MCF 10A (cell line): ENCODE measurements at regions of chr17 and their contacts with region 1.

Region 1: GRCh38 chr17:7834962-7835813 is 1.2 kb downstream of the KDM6B start:
- DNase-seq: peak; percentile 97
- H3K4me3 Mint-ChIP-seq: peak overlapping the region; percentile 89
- H3K27ac Mint-ChIP-seq: peak overlapping the region; percentile 99
- H3K4me1 Mint-ChIP-seq: peaks cover 43% of the 10 kb centered on the region
- H3K27me3 Mint-ChIP-seq: no peaks in the 10 kb centered on the region
- CTCF ChIP-seq: peak; percentile 73

Region 2: GRCh38 chr17:7583253-7584109 is 251.7 kb before region 1 on chr17 and contains the start of gene MPDU1:
- CTCF ChIA-PET with region 1: interaction called, 3 read pairs
- POLR2A ChIA-PET with region 1: interaction called, 14 read pairs
- intact Hi-C with region 1: no loop called
- DNase-seq: peak; percentile 98
- H3K4me3 Mint-ChIP-seq: peak within 1 kb of the TSS; percentile 93
- H3K27ac Mint-ChIP-seq: peak within 1 kb of the TSS; percentile 100
- H3K4me1 Mint-ChIP-seq: peaks cover 56% of the 10 kb centered on the region
- H3K27me3 Mint-ChIP-seq: no peaks in the 10 kb centered on the region
- CTCF ChIP-seq: no peak
- total RNA-seq, gene MPDU1: 52.0 and 56.5 TPM in 2 replicates

Region 3: DNA sequence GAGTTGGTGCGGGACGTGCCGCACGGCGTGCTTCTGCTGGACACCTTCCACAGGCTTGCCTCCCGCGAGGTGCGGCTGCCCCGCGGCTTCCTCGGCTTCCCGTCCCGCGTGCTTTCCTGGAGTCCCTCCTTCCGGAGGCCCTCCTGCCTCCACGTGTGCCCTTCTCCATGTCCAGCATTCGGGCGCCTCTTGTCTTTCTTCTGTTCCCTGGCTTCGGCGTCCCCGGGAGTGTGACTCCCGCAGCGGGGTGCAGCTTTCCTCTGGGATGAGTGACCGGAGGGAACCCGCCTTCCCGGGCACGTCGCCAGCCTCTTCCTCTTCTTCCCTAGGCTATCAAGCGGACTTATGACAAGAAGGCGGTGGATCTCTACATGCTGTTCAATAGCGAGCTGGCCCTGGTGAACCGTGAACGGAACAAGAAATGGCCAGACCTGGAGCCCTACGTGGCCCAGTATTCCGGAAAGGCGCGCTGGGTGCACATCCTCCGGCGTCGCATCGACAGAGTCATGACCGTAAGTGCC is 94.6 kb before region 1 on chr17:
- CTCF ChIA-PET with region 1: interaction called, 36 read pairs
- POLR2A ChIA-PET with region 1: interaction called, 11 read pairs
- intact Hi-C with region 1: no loop called
- DNase-seq: no peak
- H3K4me3 Mint-ChIP-seq: peak overlapping the region; percentile 67
- H3K27ac Mint-ChIP-seq: peak overlapping the region; percentile 43
- H3K4me1 Mint-ChIP-seq: peaks cover 6% of the 10 kb centered on the region
- H3K27me3 Mint-ChIP-seq: peaks cover 56% of the 10 kb centered on the region
- CTCF ChIP-seq: no peak

Region 4: GRCh38 chr17:7794075-7794663 is 41.0 kb before region 1 on chr17:
- CTCF ChIA-PET with region 1: no interaction called
- POLR2A ChIA-PET with region 1: no interaction called
- intact Hi-C with region 1: no loop called
- DNase-seq: no peak
- H3K4me3 Mint-ChIP-seq: no peak overlapping the region
- H3K27ac Mint-ChIP-seq: no peak overlapping the region
- H3K4me1 Mint-ChIP-seq: no peaks in the 10 kb centered on the region
- H3K27me3 Mint-ChIP-seq: no peaks in the 10 kb centered on the region
- CTCF ChIP-seq: no peak

Region 5: DNA sequence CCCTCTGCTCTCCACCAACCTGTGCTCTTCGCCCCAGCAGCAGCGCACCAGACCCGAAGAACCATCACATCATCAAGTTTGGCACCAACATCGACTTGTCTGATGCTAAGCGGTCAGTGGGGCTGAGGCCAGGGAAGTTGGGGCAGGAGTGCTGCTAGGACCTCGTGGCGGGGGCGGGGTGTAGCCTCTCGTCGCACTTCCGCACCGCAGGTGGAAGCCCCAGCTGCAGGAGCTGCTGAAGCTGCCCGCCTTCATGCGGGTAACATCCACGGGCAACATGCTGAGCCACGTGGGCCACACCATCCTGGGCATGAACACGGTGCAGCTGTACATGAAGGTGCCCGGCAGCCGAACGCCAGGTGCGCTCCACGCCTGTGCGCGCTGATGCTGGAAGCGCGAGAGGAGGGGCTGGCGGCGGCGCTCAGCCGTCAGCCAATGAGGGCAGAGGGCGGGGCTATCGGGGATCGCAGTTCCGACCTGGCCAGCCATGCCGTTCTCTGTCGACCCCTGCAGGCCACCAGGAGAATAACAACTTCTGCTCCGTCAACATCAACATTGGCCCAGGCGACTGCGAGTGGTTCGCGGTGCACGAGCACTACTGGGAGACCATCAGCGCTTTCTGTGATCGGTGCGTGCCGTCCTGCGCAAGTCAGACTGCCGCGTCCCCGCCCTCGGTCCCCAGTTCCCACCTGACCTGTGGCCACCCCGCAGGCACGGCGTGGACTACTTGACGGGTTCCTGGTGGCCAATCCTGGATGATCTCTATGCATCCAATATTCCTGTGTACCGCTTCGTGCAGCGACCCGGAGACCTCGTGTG is 16.5 kb after region 1 on chr17:
- CTCF ChIA-PET with region 1: interaction called, 8 read pairs
- POLR2A ChIA-PET with region 1: interaction called, 70 read pairs
- intact Hi-C with region 1: loop called (anchors 1 kb)
- DNase-seq: peak; percentile 85
- H3K4me3 Mint-ChIP-seq: no peak overlapping the region
- H3K27ac Mint-ChIP-seq: peak overlapping the region; percentile 16
- H3K4me1 Mint-ChIP-seq: peaks cover 7% of the 10 kb centered on the region
- H3K27me3 Mint-ChIP-seq: no peaks in the 10 kb centered on the region
- CTCF ChIP-seq: peak; percentile 91

Region 6: DNA sequence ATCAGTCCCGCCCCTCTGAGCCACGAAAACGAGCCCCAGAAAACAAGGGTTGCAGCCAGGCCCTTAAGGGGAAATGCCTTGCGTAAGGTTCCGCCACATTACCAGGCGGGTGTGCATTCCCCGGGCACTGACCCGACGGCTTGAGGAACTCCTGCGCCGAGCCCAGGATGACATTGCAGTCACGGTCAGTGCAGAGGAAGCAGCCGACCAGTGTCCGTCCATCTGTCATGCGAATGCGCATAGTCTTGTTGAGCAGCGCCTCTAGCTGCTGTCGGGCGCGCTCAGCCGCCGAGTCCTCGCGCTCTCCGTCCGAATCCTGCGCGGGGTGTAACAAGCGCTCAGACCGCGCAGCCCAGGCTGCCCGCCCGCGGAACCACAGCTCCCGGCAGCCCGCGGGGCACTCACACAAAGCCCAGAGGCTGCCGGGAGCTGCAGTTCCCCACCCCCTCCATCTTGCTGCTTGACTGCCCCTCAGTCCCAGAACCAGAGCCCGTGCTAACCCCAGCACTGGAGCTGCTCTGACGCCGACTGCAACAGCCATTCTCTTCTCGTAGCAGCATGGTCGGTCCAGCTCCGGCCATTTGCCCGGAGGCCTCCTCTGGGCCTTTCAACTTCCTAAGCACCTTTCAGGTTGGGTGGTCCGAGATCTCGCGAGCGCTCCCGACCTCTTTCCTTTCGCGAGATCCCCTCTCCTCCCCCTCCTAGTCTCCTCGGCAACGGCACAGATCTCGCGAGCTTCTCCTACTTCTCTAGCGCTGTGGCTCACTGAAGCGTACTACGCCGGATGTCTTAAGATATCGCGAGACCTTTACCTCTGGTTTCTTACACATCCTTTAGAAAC is 21.9 kb after region 1 on chr17 and contains the start of gene NAA38:
- CTCF ChIA-PET with region 1: interaction called, 8 read pairs
- POLR2A ChIA-PET with region 1: interaction called, 70 read pairs
- intact Hi-C with region 1: loop called (anchors 1 kb)
- DNase-seq: peak; percentile 99
- H3K4me3 Mint-ChIP-seq: no peak within 1 kb of the TSS
- H3K27ac Mint-ChIP-seq: no peak within 1 kb of the TSS
- H3K4me1 Mint-ChIP-seq: peaks cover 7% of the 10 kb centered on the region
- H3K27me3 Mint-ChIP-seq: no peaks in the 10 kb centered on the region
- CTCF ChIP-seq: peak; percentile 22
- total RNA-seq, gene NAA38: 70.2 and 83.4 TPM in 2 replicates

Region 7: DNA sequence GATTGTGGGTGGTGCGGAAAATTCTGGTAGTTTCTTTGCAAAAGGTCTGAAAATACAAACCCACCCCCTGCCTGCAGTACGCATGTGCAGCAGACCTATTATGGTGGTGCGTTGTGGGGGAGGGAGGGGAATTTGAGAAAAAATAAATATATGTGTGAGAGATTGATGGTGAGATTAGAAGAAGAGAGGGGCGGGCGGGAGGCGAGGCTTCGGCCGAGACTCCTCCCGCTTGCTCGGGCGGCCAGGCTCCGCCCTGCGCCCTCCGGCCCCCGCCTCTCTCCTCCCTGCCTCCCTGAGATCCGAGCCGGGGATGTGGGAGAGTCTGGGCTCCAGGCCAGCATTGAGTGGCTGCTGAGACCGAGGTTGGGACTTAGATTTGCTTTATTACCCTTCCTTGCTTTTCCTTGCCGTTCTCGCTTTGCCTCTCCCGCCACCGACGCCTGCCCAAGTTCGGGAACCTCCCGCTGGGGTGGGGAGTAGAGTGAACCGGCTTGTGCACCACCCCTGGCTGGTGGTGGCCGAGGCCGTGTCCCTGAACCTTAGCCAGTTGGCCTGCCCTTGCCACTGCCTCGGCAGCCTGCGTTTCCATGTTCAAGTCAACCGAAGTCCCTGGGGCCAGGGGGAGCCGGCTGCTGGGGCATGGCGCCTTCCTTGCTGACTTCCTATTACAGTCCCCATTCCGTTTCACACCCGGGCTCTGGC is 52.4 kb after region 1 on chr17:
- CTCF ChIA-PET with region 1: interaction called, 3 read pairs
- POLR2A ChIA-PET with region 1: interaction called, 4 read pairs
- intact Hi-C with region 1: loop called (anchors 2 kb)
- DNase-seq: peak; percentile 97
- H3K4me3 Mint-ChIP-seq: no peak overlapping the region
- H3K27ac Mint-ChIP-seq: no peak overlapping the region
- H3K4me1 Mint-ChIP-seq: no peaks in the 10 kb centered on the region
- H3K27me3 Mint-ChIP-seq: no peaks in the 10 kb centered on the region
- CTCF ChIP-seq: no peak

Region 8: DNA sequence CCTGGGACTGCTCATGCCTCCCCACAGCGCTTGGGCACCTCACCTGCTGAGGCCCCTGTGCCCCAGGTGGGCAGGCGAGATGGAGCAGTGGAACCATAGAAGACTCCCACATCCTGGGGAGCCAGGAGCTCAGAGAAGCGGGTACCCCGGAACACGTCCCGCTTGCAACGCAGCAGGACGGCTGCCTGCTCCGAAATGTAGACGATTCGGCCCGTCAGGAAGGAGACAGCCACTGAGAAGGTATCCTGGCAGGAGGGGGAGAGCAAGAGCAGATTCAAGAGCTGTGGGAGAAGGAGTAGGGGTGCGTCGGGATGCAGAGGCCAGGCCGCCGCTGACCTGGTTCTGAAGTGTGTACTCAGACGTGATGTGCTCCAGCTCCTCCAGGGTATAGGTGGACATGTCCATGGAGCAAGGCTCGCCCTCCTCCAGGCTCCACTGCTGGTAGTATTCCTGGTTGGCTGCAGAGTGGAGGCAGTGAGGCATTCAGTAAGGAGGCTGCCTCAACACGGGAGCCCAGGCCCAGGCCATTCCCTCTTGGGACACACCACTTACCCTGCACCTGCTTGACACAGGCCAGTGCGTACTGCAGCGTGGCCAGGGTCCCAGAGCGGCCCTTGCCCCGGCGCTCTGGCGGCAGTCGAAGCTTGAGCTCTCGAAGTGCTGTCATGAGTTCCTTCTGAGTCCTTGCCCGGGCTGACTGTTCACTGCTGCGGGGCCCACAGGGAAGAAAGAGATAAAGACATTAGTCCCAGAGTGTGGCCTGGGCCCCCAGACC is 314.4 kb after region 1 on chr17:
- CTCF ChIA-PET with region 1: no interaction called
- POLR2A ChIA-PET with region 1: no interaction called
- intact Hi-C with region 1: no loop called
- DNase-seq: no peak
- H3K4me3 Mint-ChIP-seq: peak overlapping the region; percentile 31
- H3K27ac Mint-ChIP-seq: no peak overlapping the region
- H3K4me1 Mint-ChIP-seq: peaks cover 33% of the 10 kb centered on the region
- H3K27me3 Mint-ChIP-seq: no peaks in the 10 kb centered on the region
- CTCF ChIP-seq: no peak